HCT116 (cell line): ENCODE measurements at regions of chr16 and their contacts with region 1.

Region 1: GRCh38 chr16:2883027-2883851 is at the start of gene FLYWCH2:
- DNase-seq: peak; percentile 91
- ATAC-seq: peak; percentile 78
- H3K4me3 ChIP-seq: peak within 1 kb of the TSS; percentile 80 to 98
- H3K27ac ChIP-seq: peak within 1 kb of the TSS; percentile 78
- H3K4me1 ChIP-seq: peaks cover 9 to 18% of the 10 kb centered on the region in 2 experiments
- H3K27me3 ChIP-seq: no peaks in the 10 kb centered on the region
- CTCF ChIP-seq: no peak
- POLR2A ChIP-seq: peak; percentile 80
- RAD21 ChIP-seq: no peak
- total RNA-seq, gene FLYWCH2: 33.7 TPM

Region 2: GRCh38 chr16:2829501-2830356 is 53.5 kb before region 1 on chr16 and contains the start of gene ZG16B:
- CTCF ChIA-PET with region 1: no interaction called
- POLR2A ChIA-PET with region 1: no interaction called
- RAD21 ChIA-PET with region 1: no interaction called
- intact Hi-C with region 1: no loop called
- DNase-seq: no peak
- ATAC-seq: no peak
- H3K4me3 ChIP-seq: no peak within 1 kb of the TSS
- H3K27ac ChIP-seq: no peak within 1 kb of the TSS
- H3K4me1 ChIP-seq: no peaks in the 10 kb centered on the region
- H3K27me3 ChIP-seq: no peaks in the 10 kb centered on the region
- CTCF ChIP-seq: no peak
- POLR2A ChIP-seq: no peak
- RAD21 ChIP-seq: no peak
- total RNA-seq, gene ZG16B: 2.3 TPM

Region 3: DNA sequence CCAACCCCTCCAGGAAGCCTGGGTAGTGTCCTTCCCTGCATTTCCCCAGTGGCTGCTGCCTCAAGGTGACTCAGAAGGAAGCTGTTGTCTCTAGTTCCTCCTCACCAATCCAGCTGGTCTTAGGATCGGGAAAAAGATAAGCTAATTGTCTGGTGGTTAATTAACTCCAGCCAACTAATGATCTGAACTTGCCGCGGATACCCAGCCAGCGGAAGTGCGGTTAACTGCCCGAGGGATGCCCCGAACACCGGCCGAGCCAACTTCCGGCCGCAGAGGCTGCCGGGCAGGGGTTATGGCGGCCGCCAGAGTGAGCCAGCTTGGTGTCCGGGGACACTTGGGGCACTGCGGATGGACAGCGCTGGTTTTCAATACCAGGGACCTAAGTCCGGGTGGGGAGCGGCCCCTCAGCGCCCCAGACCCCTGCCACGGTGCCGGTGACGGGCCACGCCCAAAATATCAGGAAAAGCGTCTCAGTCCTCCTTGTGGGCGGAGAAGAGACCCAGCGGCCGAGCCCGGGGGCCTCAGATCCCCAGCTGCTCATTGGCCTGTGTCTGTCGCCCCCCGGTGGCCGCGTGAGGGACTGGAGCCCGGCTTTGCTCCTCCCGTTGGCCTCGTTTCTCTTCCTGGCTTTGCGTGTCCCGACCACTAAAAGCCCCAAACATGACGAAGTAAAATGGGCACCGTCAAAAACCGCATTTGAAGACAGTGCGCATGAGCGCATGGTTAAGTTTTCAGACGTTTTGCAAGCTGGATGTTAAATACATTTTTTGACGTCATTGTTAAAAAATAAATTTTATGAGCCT is 15.1 kb before region 1 on chr16:
- CTCF ChIA-PET with region 1: interaction called, 16 read pairs
- POLR2A ChIA-PET with region 1: interaction called, 3 read pairs
- RAD21 ChIA-PET with region 1: no interaction called
- intact Hi-C with region 1: no loop called
- DNase-seq: peak; percentile 86
- ATAC-seq: peak; percentile 96
- H3K4me3 ChIP-seq: peak overlapping the region; percentile 55 to 73
- H3K27ac ChIP-seq: peak overlapping the region; percentile 92
- H3K4me1 ChIP-seq: peaks cover 8 to 24% of the 10 kb centered on the region in 2 experiments; a peak in 3 of 4 replicates
- H3K27me3 ChIP-seq: no peaks in the 10 kb centered on the region
- CTCF ChIP-seq: peak; percentile 95 to 96 (median 96)
- POLR2A ChIP-seq: peak; percentile 90
- RAD21 ChIP-seq: peak; percentile 100